Activated T-helper 2 cell treated with anti-CD3 and anti-CD28 coated beads, Interferon-gamma antibody, Interleukin-2, Interleukin-4, amounts not matched to agents 10 μg/mL and 5 μg/mL and 100 μg/mL, durations not matched to agents 14 hours and 24 hours and 36 hours (primary cell): ENCODE measurements at regions of chr6 and their contacts with region 1.

Region 1: DNA sequence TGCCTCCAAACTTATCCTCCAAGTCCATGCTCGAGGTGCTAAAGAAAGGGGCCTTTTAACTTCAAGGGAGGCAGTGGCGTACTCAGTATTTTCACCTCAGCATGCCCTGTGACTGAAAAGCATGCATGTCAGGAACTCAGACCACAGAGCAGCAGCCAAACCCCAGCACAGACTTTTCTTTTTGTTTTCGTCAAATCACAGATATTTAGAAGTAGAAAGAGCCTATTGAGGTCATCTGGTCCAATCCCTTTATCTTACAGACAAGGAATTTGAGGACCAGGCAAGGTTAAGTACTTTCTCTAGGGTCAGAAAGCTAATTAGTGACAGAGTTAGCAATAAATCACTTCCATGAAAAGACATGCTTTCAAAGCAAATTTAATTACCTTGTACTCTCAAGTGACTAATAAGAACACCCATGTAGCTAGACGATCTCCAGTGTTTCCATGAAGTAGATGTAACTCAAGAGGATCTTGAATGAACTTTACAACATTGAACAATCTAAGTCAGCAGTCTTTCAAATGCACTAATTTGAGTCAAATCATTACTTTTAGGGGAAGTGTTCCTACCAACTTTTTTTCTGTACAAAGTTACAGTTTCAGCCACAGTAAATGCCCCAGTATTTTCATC is 35.9 kb downstream of the MOXD1 start:
- DNase-seq: no peak
- H3K4me3 Mint-ChIP-seq: no peak overlapping the region
- H3K27ac Mint-ChIP-seq: peak overlapping the region; percentile 38
- H3K4me1 Mint-ChIP-seq: peaks cover 17% of the 10 kb centered on the region
- H3K27me3 Mint-ChIP-seq: peaks cover 42% of the 10 kb centered on the region

Region 2: DNA sequence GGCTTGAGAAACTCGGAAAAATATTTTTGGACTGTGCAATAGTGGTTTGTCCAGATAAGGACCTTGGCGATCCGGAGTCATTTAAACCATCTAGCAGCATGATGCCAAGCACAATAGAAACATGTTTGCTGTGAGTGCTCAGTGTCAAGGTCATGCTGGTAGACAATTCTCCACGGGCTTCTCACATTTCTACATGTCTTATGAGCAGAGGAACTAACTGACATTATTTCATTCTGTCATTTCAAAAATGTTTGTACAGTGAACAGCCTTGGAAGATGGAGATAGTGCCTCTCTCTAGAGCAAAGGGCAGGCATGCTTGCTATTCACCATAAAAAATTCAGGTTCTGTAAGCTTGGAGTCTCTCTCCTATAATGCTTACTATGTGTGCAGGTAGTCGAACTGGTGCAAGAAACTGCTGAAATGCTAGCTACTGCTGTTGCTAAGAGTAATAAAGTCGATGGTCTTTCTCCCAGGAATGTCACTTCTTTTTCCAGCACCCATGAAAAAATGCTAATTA is 388.8 kb before region 1 on chr6:
- intact Hi-C with region 1: no loop called
- DNase-seq: no peak
- H3K4me3 Mint-ChIP-seq: no peak overlapping the region
- H3K27ac Mint-ChIP-seq: no peak overlapping the region
- H3K4me1 Mint-ChIP-seq: no peaks in the 10 kb centered on the region
- H3K27me3 Mint-ChIP-seq: peaks cover 6% of the 10 kb centered on the region

Region 3: GRCh38 chr6:132247381-132248159 is 117.8 kb before region 1 on chr6:
- intact Hi-C with region 1: no loop called
- DNase-seq: no peak
- H3K4me3 Mint-ChIP-seq: no peak overlapping the region
- H3K27ac Mint-ChIP-seq: no peak overlapping the region
- H3K4me1 Mint-ChIP-seq: no peaks in the 10 kb centered on the region
- H3K27me3 Mint-ChIP-seq: peaks cover 3% of the 10 kb centered on the region

Region 4: GRCh38 chr6:132304891-132305305 is 60.5 kb before region 1 on chr6:
- intact Hi-C with region 1: no loop called
- DNase-seq: no peak
- H3K4me3 Mint-ChIP-seq: no peak overlapping the region
- H3K27ac Mint-ChIP-seq: no peak overlapping the region
- H3K4me1 Mint-ChIP-seq: no peaks in the 10 kb centered on the region
- H3K27me3 Mint-ChIP-seq: peaks cover 9% of the 10 kb centered on the region

Region 5: GRCh38 chr6:132320007-132320406 is 45.4 kb before region 1 on chr6:
- intact Hi-C with region 1: loop called (anchors 5 kb)
- DNase-seq: no peak
- H3K4me3 Mint-ChIP-seq: no peak overlapping the region
- H3K27ac Mint-ChIP-seq: no peak overlapping the region
- H3K4me1 Mint-ChIP-seq: no peaks in the 10 kb centered on the region
- H3K27me3 Mint-ChIP-seq: peaks cover 2% of the 10 kb centered on the region

Region 6: DNA sequence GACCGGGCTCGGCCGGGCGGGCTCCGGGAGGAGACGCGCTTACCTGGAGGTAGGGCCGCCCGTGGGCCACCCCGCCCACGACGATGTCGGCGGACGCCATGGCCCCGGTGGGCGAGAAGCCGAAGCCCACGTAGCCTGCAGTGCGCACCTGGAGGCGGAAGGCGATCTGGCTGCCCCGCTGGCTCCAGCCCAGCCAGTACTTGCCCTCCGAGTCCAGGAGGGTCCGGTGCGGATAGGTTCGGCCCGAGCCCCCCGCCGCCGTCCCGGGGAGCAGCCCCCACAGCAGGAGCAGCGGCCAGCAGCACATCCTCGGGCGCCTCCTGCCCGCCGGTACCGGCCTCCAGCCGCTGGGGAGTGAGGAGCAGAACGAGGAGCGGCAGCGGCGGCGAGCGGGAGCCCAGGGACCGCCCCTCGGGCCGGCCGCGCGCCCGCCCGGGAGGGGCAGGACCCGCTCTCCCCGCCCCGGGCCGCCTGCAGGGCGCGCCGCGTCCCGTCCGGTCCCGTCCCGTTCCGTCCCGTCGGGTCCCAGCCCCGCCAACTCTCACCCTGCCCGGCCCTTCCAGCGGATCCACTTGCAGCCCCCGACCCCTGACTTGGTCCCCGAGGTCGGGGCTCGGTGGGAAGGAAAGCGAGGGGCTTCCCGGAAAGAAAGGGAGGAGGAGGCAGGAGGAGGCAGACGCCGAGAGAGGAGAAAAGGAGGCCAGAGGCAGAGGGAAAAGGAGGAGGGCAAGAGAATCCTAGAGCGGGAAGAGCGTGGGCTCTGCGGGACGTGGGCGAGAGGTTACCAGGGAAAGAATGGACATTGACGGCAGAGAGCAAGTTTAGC is 35.9 kb after region 1 on chr6 and contains the start of gene MOXD1:
- intact Hi-C with region 1: loop called (anchors 2 kb)
- DNase-seq: no peak
- H3K4me3 Mint-ChIP-seq: no peak within 1 kb of the TSS
- H3K27ac Mint-ChIP-seq: no peak within 1 kb of the TSS
- H3K4me1 Mint-ChIP-seq: peaks cover 8% of the 10 kb centered on the region
- H3K27me3 Mint-ChIP-seq: peaks cover 73% of the 10 kb centered on the region
- total RNA-seq, gene MOXD1: not detected in 2 replicates

Region 7: GRCh38 chr6:132465530-132466485 is 100.4 kb after region 1 on chr6:
- intact Hi-C with region 1: loop called (anchors 5 kb)
- DNase-seq: no peak
- H3K4me3 Mint-ChIP-seq: no peak overlapping the region
- H3K27ac Mint-ChIP-seq: no peak overlapping the region
- H3K4me1 Mint-ChIP-seq: no peaks in the 10 kb centered on the region
- H3K27me3 Mint-ChIP-seq: no peaks in the 10 kb centered on the region

Region 8: GRCh38 chr6:132490024-132490423 is 124.6 kb after region 1 on chr6:
- intact Hi-C with region 1: loop called (anchors 10 kb)
- DNase-seq: no peak
- H3K4me3 Mint-ChIP-seq: no peak overlapping the region
- H3K27ac Mint-ChIP-seq: no peak overlapping the region
- H3K4me1 Mint-ChIP-seq: peaks cover 20% of the 10 kb centered on the region
- H3K27me3 Mint-ChIP-seq: no peaks in the 10 kb centered on the region

Region 9: DNA sequence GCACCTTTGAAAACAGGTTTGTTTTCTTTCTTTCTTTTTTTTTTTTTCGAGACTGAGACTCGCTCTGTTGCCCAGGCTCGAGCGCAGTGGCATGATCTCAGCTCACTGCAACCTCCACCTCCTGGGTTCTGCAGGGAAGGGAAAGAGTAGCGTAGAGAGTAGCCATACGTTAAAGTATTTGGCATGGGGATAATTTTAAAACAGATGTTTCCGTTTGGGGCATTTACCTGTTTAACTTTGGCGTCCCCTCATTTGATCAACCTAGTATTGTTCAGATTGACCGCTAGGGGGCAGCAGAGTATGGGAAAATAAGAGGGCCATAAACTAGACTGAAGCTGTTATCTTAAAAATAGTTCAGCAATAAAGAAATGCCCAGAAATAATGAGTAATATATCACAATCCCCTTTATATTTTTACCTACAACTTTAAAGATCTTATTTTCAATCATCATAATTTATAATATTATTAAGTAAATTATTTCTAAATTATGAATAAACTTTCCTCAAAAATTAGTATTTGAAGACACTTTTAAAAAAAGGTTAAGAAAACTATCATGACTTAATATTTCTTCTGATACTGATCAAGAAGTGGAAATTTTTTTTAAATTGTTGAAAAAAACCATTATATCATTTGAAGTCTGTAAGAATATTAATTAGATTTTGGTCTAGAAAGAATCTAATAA is 165.0 kb after region 1 on chr6:
- intact Hi-C with region 1: no loop called
- DNase-seq: peak; percentile 36
- H3K4me3 Mint-ChIP-seq: no peak overlapping the region
- H3K27ac Mint-ChIP-seq: no peak overlapping the region
- H3K4me1 Mint-ChIP-seq: no peaks in the 10 kb centered on the region
- H3K27me3 Mint-ChIP-seq: peaks cover 18% of the 10 kb centered on the region